AG04449 (cell line): ENCODE measurements at regions of chr9 and their contacts with region 1.

Region 1: GRCh38 chr9:98998441-98999151 is 54.9 kb downstream of the COL15A1 start:
- DNase-seq: no peak
- H3K4me3 ChIP-seq: no peak overlapping the region
- CTCF ChIP-seq: peak; percentile 96

Region 2: GRCh38 chr9:98472216-98472615 is 526.4 kb before region 1 on chr9:
- CTCF ChIA-PET with region 1: no interaction called
- POLR2A ChIA-PET with region 1: no interaction called
- DNase-seq: no peak
- H3K4me3 ChIP-seq: no peak overlapping the region
- CTCF ChIP-seq: no peak

Region 3: DNA sequence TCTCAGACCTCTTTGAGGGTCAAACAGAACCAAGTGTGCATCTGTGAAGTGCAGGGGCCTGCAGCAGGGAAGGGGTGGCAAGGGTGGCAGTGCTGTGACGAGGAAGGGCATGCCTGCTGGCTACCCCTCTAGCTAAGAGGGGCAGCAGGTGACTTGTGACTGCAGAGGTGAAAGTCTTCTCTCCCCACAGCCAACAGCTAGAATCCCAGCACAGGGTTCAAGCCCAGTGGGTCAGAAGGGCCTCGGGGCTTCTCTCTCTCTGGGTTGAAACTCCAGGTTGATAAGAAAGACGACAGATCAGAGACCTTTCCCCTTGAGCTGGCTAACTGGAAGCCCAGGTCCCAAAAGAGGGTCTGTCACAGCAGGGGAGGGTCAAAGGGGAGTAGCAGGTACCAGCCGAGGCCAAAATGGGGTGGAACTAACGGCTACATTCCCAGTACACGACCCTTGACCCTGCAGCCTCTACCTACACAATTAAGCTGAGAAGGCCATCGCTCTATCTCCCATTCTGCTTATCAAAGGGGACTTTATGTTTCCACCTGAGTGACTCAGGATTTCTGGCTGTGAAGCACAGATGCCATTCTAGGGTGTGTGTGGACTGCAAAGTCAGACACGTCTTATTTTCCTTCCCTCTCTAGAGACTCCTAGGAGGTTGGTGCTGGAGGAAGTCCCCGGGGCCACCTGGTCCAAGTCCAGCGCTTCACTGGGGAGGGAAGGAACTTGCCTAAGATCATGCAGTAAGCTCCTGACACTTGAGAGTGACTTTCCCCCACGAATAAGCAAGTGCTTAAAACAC is 216.8 kb before region 1 on chr9:
- CTCF ChIA-PET with region 1: no interaction called
- POLR2A ChIA-PET with region 1: no interaction called
- DNase-seq: no peak
- H3K4me3 ChIP-seq: no peak overlapping the region
- CTCF ChIP-seq: no peak

Region 4: DNA sequence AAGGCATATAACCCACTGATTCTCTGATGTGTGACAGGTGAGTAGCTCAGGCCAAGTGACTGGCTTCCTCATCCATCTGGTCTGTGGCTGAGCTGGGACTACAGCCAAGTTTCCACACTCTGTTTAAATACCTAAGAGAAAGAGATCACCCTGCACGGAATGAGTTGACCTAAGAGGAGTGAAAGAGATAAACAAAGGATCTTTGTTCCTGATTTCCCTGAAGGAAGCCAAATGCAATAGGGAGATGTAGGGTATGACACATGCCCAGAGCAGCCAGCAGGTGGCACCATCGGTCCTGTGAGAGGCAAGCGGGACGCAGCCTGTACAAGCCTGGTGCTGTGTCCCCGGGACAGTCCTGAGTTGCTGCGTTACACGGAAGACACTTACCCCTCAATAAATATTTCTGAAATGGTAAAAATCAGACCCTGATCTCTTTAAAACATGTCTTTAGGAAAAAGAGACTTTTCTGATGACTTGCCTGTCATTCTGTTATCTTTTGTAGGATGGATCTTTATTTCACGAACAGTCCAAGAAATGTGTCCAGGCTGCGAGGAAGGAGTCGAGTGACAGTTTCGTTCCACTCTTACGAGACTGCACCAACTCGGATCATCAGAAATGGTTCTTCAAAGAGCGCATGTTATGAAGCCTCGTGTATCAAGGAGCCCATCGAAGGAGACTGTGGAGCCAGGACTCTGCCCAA is 150.0 kb before region 1 on chr9:
- CTCF ChIA-PET with region 1: interaction called, 245 read pairs
- POLR2A ChIA-PET with region 1: no interaction called
- DNase-seq: peak; percentile 23
- H3K4me3 ChIP-seq: peak overlapping the region; percentile 31
- CTCF ChIP-seq: peak; percentile 91

Region 5: GRCh38 chr9:98958271-98958984 is 40.2 kb before region 1 on chr9:
- CTCF ChIA-PET with region 1: interaction called, 16 read pairs
- POLR2A ChIA-PET with region 1: no interaction called
- DNase-seq: peak; percentile 21
- H3K4me3 ChIP-seq: no peak overlapping the region
- CTCF ChIP-seq: no peak

Region 6: GRCh38 chr9:98983295-98984268 is 15.0 kb before region 1 on chr9:
- CTCF ChIA-PET with region 1: interaction called, 192 read pairs
- POLR2A ChIA-PET with region 1: no interaction called
- DNase-seq: peak; percentile 74
- H3K4me3 ChIP-seq: no peak overlapping the region
- CTCF ChIP-seq: no peak

Region 7: DNA sequence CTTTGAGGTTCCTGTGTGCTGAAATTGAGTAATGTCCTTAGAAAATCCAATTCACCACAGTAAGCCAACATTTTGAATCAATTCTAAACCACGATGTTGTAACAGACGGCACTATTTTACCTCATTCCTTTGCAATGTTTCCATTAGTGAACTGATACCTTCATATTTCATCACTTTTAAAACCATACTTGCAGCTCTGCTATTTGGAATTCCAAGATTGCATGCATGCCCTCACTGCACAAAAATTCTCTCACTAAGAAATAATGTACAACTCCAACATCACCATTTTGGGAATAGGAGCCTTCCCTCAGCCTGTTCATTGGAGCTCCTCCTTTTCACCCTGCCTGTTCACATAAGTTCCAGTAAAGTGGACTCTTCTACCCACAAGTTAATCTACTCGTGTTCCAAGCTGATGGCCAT is 31.5 kb after region 1 on chr9:
- CTCF ChIA-PET with region 1: interaction called, 200 read pairs
- POLR2A ChIA-PET with region 1: interaction called, 3 read pairs
- DNase-seq: peak; percentile 99
- H3K4me3 ChIP-seq: no peak overlapping the region
- CTCF ChIP-seq: no peak

Region 8: DNA sequence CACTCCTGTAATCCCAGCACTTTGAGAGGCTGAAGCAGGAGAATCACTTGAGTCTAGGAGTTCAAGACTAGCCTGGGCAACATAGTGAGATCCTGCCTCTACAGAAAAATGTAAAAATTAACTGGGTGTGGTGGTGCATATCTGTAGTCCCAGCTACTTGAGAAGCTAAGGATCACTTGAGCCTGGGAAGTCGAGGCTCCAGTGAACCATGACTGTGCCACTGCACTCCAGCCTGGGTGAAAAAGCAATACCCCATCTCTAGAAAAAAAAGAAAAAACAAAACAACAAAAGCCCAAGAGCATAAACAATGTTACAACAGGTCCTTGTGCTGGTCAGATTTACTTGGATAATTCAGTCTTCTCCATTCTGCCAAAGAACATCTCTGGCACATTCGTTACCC is 62.0 kb after region 1 on chr9:
- CTCF ChIA-PET with region 1: no interaction called
- POLR2A ChIA-PET with region 1: no interaction called
- DNase-seq: no peak
- H3K4me3 ChIP-seq: no peak overlapping the region
- CTCF ChIP-seq: no peak

Region 9: GRCh38 chr9:99140685-99141314 is 142.2 kb after region 1 on chr9:
- CTCF ChIA-PET with region 1: interaction called, 342 read pairs
- POLR2A ChIA-PET with region 1: no interaction called
- DNase-seq: no peak
- H3K4me3 ChIP-seq: no peak overlapping the region
- CTCF ChIP-seq: peak; percentile 84

Region 10: DNA sequence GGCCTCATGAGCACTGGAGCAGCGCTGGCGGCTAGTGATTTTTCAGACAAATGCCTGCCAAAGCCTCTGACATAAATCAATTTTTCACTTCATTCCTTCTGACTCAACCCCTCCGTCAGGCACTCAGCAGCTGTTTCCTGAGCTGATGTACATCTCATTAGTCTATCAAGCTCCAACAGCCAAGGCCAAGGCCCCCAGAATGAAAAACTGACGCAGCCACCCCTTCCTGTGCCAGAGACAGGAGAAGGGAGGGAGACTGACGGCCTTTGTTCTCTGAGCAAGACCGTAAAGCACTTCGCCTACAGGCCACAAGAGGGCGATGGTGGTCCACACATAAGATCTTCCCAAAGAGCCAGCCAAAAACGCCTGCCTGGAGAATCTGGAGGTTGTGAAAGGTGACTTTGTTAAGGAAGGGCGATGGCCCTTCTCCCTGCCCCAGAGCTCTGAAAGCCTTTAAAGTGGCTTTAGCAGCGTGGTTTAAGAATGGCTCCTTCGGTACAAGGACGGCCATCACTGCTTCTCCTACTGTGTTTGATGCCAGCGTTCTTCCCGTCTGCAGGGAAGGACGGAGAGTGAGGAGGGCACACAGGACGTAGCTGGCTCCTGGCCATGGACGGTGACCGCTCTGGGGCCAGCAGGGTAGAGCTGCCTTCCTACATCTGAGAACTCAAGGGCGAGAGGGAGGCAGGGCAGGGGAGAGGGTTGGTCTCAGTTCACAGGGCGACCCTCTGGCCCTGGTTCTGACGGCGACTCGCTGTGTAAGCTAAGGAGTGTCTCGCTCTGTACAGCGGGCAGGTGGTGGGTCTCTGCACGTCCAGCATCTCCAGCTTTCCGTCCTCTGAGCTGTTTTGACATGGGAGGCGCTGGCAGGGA is 186.1 kb after region 1 on chr9:
- CTCF ChIA-PET with region 1: interaction called, 10 read pairs
- POLR2A ChIA-PET with region 1: no interaction called
- DNase-seq: peak; percentile 51
- H3K4me3 ChIP-seq: peak overlapping the region; percentile 15; the same call in 1 of the 2 replicates
- CTCF ChIP-seq: peak; percentile 89

Region 11: DNA sequence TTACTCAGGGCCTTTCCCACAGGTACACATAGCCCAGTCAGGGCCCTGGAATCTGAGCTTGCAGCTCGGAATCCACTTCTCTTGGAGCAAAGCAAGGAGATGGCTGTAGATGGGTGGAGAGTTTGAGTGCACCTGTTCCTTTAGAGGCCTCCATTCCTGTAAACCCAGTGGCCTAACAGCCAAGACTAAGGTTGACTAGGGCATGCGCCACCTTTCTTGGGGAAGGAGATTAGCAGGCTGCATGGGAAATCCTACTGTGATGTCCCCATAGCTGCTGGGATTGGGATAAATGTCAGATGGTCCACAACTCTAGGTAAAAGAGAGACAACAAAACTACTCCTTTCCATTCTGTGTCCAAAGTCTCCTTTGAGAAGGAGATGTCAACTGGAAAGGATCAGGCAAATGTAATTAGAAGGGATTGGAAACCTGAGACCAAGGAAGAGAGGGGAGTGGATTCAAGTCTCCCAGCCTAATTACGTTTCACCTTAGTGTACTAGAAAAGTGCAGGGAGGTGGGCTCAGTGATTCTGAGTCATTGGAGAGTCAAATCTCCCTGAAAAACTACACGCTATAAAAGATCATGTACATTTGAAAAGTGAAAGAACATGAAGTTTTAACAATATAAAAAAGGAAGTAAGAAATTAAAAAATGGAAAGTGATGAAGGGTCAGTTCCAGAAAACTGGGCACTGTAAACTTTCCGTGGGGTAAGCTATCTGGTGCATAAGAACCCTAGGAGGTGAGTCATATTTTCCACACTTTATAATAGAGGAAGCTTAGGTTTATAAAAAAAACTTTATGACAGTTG is 327.7 kb after region 1 on chr9:
- CTCF ChIA-PET with region 1: no interaction called
- POLR2A ChIA-PET with region 1: no interaction called
- DNase-seq: no peak
- H3K4me3 ChIP-seq: no peak overlapping the region
- CTCF ChIP-seq: no peak